Endothelial cell of umbilical vein (primary cell): ENCODE measurements at regions of chr11 and their contacts with region 1.

Region 1: DNA sequence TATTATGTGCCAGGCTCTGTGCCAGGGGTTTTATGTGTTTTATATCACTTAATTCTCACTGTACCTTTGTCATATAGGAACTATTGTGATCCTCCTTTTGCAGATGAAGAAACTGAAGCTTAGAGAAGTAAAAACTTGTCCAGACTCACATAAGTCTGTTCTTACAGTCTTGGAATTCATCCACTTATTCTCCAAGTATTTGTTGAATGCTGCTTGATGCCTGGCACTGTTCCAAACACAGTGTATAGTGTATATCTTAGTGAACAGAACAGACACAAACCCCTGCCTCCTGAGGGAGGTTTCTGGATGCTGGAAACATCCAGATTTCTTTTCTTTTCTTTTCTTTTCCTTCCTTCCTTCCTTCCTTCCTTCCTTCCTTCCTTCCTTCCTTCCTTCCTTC is 29.0 kb upstream of the FGF3 start:
- DNase-seq: no peak
- H3K4me3 ChIP-seq: no peak overlapping the region
- H3K27ac ChIP-seq: no peak overlapping the region
- H3K4me1 ChIP-seq: no peaks in the 10 kb centered on the region
- H3K27me3 ChIP-seq: peaks cover 0 to 4% of the 10 kb centered on the region in 2 experiments
- CTCF ChIP-seq: no peak
- POLR2A ChIP-seq: no peak

Region 2: GRCh38 chr11:69787457-69787856 is 60.7 kb before region 1 on chr11:
- CTCF ChIA-PET with region 1: interaction called, 3 read pairs
- POLR2A ChIA-PET with region 1: no interaction called
- dilution Hi-C with region 1: no loop called
- intact Hi-C with region 1: loop called (anchors 2 kb)
- DNase-seq: no peak
- H3K4me3 ChIP-seq: no peak overlapping the region
- H3K27ac ChIP-seq: no peak overlapping the region
- H3K4me1 ChIP-seq: no peaks in the 10 kb centered on the region
- H3K27me3 ChIP-seq: peaks cover 0 to 2% of the 10 kb centered on the region in 2 experiments
- CTCF ChIP-seq: no peak
- POLR2A ChIP-seq: no peak

Region 3: GRCh38 chr11:69817265-69818230 is 30.7 kb before region 1 on chr11:
- CTCF ChIA-PET with region 1: no interaction called
- POLR2A ChIA-PET with region 1: no interaction called
- dilution Hi-C with region 1: no loop called
- intact Hi-C with region 1: no loop called
- DNase-seq: no peak
- H3K4me3 ChIP-seq: no peak overlapping the region
- H3K27ac ChIP-seq: no peak overlapping the region
- H3K4me1 ChIP-seq: no peaks in the 10 kb centered on the region
- H3K27me3 ChIP-seq: peaks cover 44% of the 10 kb centered on the region in 2 experiments
- CTCF ChIP-seq: no peak
- POLR2A ChIP-seq: no peak

Region 4: DNA sequence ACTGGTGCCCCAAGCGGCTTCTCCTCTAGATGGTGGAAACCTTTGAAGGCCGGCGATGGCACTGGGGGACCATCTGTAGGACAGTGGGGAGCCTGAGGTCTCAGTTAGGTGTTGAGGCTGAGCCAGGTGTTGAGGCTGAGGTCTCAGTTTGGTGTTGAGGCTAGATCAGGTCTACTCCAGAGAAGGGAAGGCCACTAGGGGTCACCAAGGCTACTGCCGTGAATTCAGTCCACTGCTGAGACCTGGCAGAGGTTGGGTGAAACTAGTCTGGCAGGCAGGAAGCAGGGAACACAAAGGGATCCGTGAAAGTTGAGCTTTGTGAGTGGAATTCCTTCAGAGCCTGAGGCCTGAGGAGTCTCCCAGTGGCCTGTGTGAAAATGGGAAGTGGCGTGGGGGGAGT is 94.9 kb after region 1 on chr11:
- CTCF ChIA-PET with region 1: no interaction called
- POLR2A ChIA-PET with region 1: no interaction called
- dilution Hi-C with region 1: no loop called
- intact Hi-C with region 1: no loop called
- DNase-seq: no peak
- H3K4me3 ChIP-seq: no peak overlapping the region
- H3K27ac ChIP-seq: no peak overlapping the region
- H3K4me1 ChIP-seq: no peaks in the 10 kb centered on the region
- H3K27me3 ChIP-seq: peaks cover 0 to 4% of the 10 kb centered on the region in 2 experiments
- CTCF ChIP-seq: no peak
- POLR2A ChIP-seq: no peak